Activated CD4-positive, alpha-beta memory T cell treated with anti-CD3 and anti-CD28 coated beads, Interleukin-2, amount 10 ng/mL, durations not matched to agents 7 days and 5 days (primary cell): ENCODE measurements at regions of chr11 and their contacts with region 1.

Region 1: GRCh38 chr11:59787816-59788215 is 22.8 kb downstream of the MRPL16 start:
- DNase-seq: no peak
- H3K4me3 Mint-ChIP-seq: no peak overlapping the region
- H3K27ac Mint-ChIP-seq: no peak overlapping the region
- H3K4me1 Mint-ChIP-seq: peaks cover 54% of the 10 kb centered on the region
- H3K27me3 Mint-ChIP-seq: no peaks in the 10 kb centered on the region

Region 2: DNA sequence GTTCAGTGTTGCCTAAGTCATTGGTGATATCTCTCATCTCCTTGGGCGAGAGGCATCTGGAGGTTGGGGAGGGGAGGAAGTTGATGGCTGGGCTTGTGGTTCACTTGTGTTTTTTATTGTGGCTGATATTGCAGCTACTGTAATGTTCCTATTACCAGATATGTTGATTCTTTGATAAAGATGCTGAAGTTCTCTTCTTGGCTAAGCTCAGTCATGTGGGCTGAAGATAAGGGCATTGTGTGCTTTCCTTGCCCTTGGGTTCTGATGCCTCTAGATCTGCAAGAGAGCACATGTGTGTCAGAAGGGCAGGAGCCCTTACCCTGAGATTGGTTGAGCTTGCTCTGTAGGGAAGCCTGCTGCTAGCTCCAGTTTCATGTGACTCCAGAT is 20.6 kb before region 1 on chr11:
- CTCF ChIA-PET with region 1: interaction called, 6 read pairs
- POLR2A ChIA-PET with region 1: interaction called, 69 read pairs
- DNase-seq: peak; percentile 63
- H3K4me3 Mint-ChIP-seq: no peak overlapping the region
- H3K27ac Mint-ChIP-seq: no peak overlapping the region
- H3K4me1 Mint-ChIP-seq: peaks cover 35% of the 10 kb centered on the region
- H3K27me3 Mint-ChIP-seq: no peaks in the 10 kb centered on the region